ENCODE measurements at regions of chr6 and their contacts with region 1.

Region 1: DNA sequence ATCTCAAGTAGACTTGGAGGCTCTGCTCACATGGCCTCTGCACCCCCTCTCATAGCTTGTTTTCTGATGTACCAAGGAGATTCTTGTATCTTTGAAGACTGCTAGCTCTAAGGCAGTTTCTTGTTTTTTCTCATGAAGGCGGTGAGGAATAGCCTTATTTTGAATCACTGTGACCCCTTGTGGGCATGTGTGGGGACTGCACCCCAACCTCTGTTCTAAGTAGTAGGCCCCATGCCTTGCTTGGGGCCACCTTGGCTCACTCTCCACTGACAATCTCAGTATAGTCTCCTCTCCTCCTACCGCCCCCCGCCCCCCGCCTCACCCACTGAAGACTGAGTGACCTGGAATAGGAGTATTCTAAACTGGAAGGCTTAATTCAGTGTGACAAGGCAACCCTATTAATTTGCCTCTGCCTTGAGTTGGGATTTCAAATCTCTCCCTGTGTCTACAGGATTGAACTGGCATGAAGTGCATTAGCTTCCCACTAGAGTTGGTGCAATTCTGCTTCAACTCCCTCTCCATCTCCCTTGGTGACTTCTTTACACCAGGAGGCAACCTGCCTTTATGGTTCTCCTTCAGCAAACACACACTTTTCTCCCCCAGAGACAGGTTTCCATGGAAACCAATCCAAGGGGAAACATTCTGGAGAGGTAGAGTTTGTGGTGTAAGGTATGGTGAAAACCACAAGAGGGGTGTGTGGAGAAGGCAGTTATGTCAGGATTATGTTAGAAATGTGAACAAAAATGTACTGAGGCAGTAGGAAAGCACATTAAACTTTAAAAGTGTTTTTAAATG is 75.5 kb upstream of the ECI2 start:
- DNase-seq: peak; percentile 42
- H3K4me3 ChIP-seq: no peak overlapping the region
- H3K27ac ChIP-seq: no peak overlapping the region
- H3K27me3 ChIP-seq: peaks cover 1% of the 10 kb centered on the region
- CTCF ChIP-seq: peak; percentile 87

Region 2: DNA sequence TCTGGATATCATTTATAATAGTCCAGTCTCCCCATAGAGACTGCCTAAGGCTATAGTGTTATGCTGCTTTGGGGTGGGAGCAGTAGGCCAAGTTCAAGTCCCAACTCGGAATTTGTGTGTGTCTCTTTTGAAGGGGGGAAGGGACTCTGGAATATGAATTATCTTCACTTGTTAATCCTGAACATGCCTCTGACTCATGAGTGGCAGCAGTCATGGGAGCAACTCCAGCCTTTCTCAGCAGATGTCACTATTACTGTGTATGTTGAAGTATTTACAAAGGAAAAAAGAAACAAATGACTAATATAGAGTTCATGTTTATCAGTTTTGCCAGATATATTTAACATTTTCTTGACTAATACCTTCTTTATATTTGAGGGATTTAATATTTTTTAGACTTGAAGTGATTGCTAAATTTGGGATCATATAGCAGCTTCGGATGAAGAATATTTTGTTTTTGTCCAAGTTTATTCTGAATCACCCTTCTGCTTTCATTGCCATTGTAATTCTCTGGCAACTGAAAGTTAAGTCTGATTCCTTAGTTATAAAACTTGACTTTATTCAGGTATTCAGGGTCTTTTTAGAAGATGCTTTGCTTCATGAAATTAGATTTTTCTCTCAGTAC is 155.3 kb before region 1 on chr6:
- CTCF ChIA-PET with region 1: interaction called, 61 read pairs
- POLR2A ChIA-PET with region 1: no interaction called
- DNase-seq: peak; percentile 39
- H3K4me3 ChIP-seq: no peak overlapping the region
- H3K27ac ChIP-seq: peak overlapping the region; percentile 40
- H3K27me3 ChIP-seq: no peaks in the 10 kb centered on the region
- CTCF ChIP-seq: peak; percentile 44

Region 3: GRCh38 chr6:4135665-4136353 is 75.0 kb before region 1 on chr6:
- CTCF ChIA-PET with region 1: interaction called, 13 read pairs
- POLR2A ChIA-PET with region 1: interaction called, 4 read pairs
- DNase-seq: peak; percentile 89
- H3K4me3 ChIP-seq: peak overlapping the region; percentile 74
- H3K27ac ChIP-seq: peak overlapping the region; percentile 54
- H3K27me3 ChIP-seq: peaks cover 4% of the 10 kb centered on the region
- CTCF ChIP-seq: no peak

Region 4: DNA sequence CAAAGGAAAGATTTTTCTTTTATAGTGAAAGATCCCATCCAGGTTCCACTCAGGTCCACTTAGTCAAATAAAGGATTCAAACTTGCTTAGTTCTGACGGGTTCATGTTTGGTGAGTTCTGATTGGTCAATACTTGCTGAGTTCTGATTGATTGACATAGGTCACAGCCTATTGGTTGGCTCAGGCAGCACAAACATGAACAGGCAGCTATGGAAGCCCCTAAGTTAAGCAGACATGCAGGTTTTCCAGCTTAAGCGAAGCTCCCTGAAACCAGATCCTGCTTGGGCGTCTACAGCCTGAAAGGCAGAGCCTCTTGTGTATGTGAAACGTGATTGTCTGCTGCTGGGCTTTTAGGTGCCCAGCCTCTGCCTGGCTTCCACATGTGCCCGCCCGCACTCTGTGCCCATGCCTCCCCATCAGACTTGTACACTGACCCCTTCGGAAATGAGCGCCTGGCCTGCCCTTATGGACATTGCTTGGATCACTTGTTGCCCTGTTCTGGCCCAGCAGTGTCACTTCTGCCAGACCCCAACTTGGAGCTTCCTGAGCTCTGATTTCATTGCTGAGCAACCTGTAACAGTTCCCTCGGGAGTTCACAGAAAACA is 30.1 kb before region 1 on chr6:
- CTCF ChIA-PET with region 1: interaction called, 16 read pairs
- POLR2A ChIA-PET with region 1: no interaction called
- DNase-seq: peak; percentile 20
- H3K4me3 ChIP-seq: no peak overlapping the region
- H3K27ac ChIP-seq: no peak overlapping the region
- H3K27me3 ChIP-seq: peaks cover 23% of the 10 kb centered on the region
- CTCF ChIP-seq: no peak

Region 5: DNA sequence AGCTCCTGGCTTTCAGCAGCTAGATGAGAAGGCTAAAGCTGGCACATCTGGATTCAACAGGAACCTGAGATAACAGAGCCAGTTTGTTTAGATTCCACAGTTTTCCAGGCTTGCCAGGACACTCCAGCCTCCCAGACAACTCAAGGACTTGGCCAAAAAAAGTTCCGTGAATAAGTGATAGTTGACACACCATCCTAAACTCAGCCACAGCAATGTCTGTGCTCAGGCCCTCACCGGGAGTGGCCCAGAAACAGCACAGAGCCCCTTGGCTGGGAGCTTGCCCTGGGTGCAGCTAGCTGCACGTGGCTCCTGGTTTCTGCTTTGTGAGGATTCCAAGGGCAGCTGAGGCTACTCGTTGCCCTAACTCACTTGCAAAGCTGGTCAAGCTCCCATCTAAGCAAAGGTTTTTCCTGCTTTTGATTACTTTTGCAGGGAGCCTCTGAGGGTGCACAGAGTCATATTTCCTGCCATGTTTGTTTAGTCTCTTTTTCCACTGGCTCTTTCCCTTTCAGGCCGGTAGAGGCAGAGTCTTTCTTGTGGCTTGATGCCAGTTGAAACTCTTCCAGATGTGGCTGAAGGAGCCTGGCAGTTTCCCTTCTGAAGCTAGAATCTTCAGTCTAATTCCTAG is 42.9 kb after region 1 on chr6:
- CTCF ChIA-PET with region 1: interaction called, 13 read pairs
- POLR2A ChIA-PET with region 1: no interaction called
- DNase-seq: peak; percentile 63
- H3K4me3 ChIP-seq: peak overlapping the region; percentile 14; the same call in 1 of the 2 replicates
- H3K27ac ChIP-seq: no peak overlapping the region
- H3K27me3 ChIP-seq: no peaks in the 10 kb centered on the region
- CTCF ChIP-seq: peak; percentile 76